ENCODE measurements at regions of chr4 and their contacts with region 1.

Region 1: GRCh38 chr4:1809754-1810511 is 16.8 kb downstream of the FGFR3 start:
- DNase-seq: peak; percentile 91

Region 2: GRCh38 chr4:1746265-1746691 is 63.7 kb before region 1 on chr4:
- CTCF ChIA-PET with region 1: interaction called, 116 read pairs
- POLR2A ChIA-PET with region 1: interaction called, 5 read pairs
- DNase-seq: peak; percentile 89

Region 3: DNA sequence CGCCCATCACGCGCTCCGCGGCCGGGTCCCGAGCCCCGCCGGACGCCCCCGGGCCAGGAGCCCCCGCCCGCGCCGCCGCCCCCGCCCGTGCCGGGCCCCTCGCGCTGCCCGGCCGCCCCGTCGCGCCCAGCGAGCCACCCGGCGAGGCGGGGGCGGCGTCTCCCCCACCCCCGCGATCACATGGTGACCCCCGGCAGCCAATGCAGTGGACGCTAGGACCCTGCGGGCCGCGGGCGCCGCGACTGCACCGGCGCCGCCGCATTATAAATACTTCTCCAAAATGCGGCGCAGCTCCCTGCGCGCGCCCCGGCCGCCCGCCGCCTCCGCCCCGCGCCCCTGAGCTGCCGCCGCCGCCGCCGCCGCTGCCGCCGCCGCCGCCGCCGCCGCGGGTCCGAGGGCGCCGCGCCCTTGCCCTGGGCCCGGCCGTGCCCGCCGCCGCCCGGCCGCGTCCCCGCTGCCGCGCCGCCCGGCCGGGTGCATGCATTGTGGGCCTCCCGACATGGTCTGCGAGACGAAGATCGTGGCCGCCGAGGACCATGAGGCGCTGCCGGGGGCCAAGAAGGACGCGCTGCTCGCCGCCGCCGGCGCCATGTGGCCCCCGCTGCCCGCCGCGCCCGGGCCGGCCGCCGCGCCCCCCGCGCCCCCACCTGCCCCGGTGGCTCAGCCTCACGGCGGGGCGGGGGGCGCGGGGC is 249.2 kb after region 1 on chr4 and contains the start of gene NAT8L:
- CTCF ChIA-PET with region 1: no interaction called
- POLR2A ChIA-PET with region 1: no interaction called
- DNase-seq: peak; percentile 80

Measured in HEK293T (cell line).